ENCODE measurements at regions of chr12 and their contacts with region 1.

Region 1: DNA sequence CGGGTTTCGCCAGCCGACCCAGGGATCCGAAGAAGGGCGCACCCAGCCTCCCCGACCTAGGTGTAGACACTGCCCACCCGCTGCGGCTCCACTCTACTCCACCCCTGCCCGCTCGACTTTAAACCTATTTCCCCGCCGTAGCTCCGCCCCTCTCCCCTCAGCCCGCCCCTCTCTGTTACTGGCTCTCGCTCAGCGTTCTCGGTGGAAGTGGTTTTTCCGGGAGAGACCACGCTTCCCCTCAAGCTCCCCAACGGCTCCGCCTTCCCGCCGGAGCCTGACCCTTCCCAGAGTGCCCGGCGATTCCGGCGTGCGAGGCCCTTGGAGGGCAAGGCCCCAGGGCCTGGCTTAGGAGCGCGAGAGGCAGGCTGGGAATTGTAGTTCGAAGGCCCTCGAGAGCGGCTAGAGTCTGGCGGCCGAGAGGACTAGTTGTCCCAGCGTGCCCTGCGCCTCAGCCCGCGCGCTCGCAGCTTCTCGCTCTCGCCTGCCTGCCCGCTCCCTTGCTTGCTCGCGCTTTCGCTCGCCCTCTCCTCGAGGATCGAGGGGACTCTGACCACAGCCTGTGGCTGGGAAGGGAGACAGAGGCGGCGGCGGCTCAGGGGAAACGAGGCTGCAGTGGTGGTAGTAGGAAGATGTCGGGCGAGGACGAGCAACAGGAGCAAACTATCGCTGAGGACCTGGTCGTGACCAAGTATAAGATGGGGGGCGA is at the start of gene PA2G4:
- H3K4me3 Mint-ChIP-seq: peak within 1 kb of the TSS; percentile 98
- H3K27ac Mint-ChIP-seq: peak within 1 kb of the TSS; percentile 91
- H3K4me1 Mint-ChIP-seq: peaks cover 21% of the 10 kb centered on the region
- H3K27me3 Mint-ChIP-seq: no peaks in the 10 kb centered on the region

Region 2: GRCh38 chr12:55817346-55818139 is 286.7 kb before region 1 on chr12 and contains the starts of genes ORMDL2 and SARNP:
- intact Hi-C with region 1: loop called (anchors 10 kb)
- H3K4me3 Mint-ChIP-seq: no peak within 1 kb of the TSS
- H3K27ac Mint-ChIP-seq: no peak within 1 kb of the TSS
- H3K4me1 Mint-ChIP-seq: peaks cover 35% of the 10 kb centered on the region
- H3K27me3 Mint-ChIP-seq: no peaks in the 10 kb centered on the region

Region 3: GRCh38 chr12:55875704-55876467 is 228.4 kb before region 1 on chr12:
- intact Hi-C with region 1: no loop called
- H3K4me3 Mint-ChIP-seq: no peak overlapping the region
- H3K27ac Mint-ChIP-seq: no peak overlapping the region
- H3K4me1 Mint-ChIP-seq: no peaks in the 10 kb centered on the region
- H3K27me3 Mint-ChIP-seq: no peaks in the 10 kb centered on the region

Region 4: DNA sequence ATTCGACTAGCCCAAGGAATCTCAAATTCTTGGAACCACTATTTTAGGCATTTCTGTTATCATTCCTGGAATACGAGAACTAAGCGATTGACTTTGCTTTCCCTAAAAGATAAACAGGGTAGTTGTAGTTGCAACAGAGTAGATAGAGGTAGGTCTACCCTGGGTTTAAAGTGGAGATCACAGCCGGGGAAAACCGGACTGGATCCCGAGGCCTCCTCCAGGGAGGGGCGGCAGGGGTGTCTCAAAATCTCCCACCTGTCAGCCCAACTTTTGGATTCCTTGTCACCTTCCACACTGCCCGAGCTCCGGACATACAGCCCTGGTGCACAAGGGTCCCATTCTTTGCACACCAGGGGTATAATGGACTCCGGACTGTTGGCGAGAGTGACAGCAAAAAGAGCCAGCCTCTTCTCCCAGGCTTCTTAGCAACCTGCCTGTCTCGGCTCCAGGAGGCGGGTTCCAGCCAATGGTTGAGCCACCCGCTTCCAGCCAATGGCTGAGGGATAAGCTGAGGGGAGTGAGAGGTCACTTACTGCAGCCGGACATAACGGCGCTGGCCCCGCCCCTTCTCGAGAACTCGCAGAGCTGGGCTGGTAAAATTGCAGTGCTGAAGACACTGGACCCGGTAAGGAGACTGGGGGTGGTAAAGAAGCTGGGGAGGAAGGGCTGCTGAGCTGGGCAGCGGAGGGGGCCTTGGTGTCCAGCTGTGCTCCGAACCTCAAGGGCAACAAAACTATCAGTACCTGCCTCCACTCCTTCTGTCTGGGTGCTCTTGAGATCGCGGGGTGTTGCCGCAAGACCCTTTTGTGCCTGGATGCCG is 107.3 kb before region 1 on chr12 and contains the start of gene SUOX:
- intact Hi-C with region 1: loop called (anchors 10 kb)
- H3K4me3 Mint-ChIP-seq: peak within 1 kb of the TSS; percentile 93
- H3K27ac Mint-ChIP-seq: peak within 1 kb of the TSS; percentile 88
- H3K4me1 Mint-ChIP-seq: peaks cover 48% of the 10 kb centered on the region
- H3K27me3 Mint-ChIP-seq: no peaks in the 10 kb centered on the region

Region 5: DNA sequence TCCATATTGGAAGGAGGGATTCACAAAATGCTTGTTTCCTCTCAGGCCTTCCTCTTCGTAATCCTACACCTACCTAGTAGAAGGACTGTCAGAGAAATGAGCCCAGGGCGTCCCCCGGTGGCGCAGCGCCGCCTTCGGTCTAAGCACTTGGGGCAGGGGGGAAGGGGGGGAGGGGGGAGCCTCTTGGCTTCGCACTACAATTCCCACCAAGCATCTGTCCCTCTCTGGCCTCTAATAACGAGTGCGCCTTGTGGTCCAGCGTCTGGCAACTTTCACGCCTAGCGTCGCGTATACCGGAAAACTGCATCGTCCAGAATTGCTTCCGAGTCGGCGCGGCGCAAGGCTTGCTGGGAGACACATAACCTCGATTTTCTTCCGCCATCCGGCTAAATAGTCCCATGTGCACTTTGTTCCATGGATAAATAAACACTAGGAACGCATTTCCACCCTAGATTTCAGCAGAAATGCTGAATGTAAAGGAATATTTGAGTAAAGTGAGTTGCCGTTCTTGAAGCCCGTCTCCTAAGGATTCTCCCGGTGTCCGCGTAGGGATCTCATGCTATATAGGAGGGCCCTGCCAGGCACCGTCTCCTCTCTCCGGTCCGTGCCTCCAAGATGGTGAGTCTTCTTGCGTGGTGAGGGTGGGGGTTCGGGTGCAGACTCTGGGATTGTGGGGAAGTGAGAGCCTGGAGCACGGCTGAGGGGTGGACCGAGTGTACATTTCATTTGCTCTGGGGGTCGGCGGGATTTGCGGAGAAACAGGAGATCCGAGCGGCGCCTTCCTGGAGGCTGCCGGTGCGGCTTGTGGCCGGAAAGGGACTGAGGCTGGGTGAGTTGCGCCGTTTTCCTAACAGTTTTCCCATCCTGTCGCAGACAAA is 62.5 kb before region 1 on chr12 and contains the start of gene RPS26:
- intact Hi-C with region 1: loop called (anchors 5 kb)
- H3K4me3 Mint-ChIP-seq: peak within 1 kb of the TSS; percentile 95
- H3K27ac Mint-ChIP-seq: peak within 1 kb of the TSS; percentile 97
- H3K4me1 Mint-ChIP-seq: peaks cover 10% of the 10 kb centered on the region
- H3K27me3 Mint-ChIP-seq: no peaks in the 10 kb centered on the region

Region 6: DNA sequence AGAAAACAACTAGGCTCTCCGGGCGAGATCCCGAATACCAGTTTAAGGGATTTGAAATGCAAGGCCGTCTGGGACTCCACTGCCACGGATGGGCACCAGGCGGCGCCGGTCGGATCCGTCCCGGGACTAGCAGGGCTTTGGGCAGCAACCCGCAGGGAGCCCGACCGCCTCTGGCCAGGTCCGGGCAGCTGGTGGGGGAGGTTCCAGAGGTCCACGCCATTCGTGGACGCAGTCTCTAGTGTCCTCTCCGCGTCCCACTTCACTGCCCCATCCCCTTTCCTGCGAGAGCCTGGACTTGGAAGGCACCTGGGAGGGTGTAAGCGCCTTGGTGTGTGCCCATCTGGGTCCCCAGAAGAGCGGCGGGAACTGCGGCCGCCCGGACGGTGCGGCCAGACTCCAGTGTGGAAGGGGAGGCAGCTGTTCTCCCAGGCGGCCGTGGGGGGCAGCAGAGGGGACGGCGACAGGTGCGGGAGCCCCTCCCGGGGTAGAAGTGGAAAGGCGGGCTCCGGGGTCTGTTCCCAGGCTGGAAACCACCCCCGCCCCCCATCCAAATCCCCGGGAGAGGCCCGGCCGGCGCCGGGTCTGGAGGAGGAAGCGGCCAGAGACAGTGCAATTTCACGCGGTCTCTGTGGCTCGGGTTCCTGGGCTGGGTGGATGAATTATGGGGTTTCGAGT is 25.1 kb before region 1 on chr12:
- intact Hi-C with region 1: loop called (anchors 1 kb)
- H3K4me3 Mint-ChIP-seq: peak overlapping the region; percentile 74
- H3K27ac Mint-ChIP-seq: peak overlapping the region; percentile 66
- H3K4me1 Mint-ChIP-seq: peaks cover 34% of the 10 kb centered on the region
- H3K27me3 Mint-ChIP-seq: peaks cover 51% of the 10 kb centered on the region

Region 7: GRCh38 chr12:56127888-56128669 is 23.8 kb after region 1 on chr12 and contains the start of gene ESYT1:
- intact Hi-C with region 1: loop called (anchors 1 kb)
- H3K4me3 Mint-ChIP-seq: peak within 1 kb of the TSS; percentile 98
- H3K27ac Mint-ChIP-seq: peak within 1 kb of the TSS; percentile 85
- H3K4me1 Mint-ChIP-seq: peaks cover 71% of the 10 kb centered on the region
- H3K27me3 Mint-ChIP-seq: no peaks in the 10 kb centered on the region